ENCODE measurements at regions of chr11 and their contacts with region 1.

Region 1: GRCh38 chr11:9273376-9274336 is 8.5 kb upstream of the DENND5A start:
- DNase-seq: no peak
- H3K4me3 ChIP-seq: no peak overlapping the region
- H3K27me3 ChIP-seq: no peaks in the 10 kb centered on the region
- CTCF ChIP-seq: no peak

Region 2: GRCh38 chr11:8610532-8611116 is 663.0 kb before region 1 on chr11:
- CTCF ChIA-PET with region 1: no interaction called
- POLR2A ChIA-PET with region 1: no interaction called
- DNase-seq: no peak
- H3K4me3 ChIP-seq: no peak overlapping the region
- H3K27me3 ChIP-seq: no peaks in the 10 kb centered on the region
- CTCF ChIP-seq: no peak

Region 3: DNA sequence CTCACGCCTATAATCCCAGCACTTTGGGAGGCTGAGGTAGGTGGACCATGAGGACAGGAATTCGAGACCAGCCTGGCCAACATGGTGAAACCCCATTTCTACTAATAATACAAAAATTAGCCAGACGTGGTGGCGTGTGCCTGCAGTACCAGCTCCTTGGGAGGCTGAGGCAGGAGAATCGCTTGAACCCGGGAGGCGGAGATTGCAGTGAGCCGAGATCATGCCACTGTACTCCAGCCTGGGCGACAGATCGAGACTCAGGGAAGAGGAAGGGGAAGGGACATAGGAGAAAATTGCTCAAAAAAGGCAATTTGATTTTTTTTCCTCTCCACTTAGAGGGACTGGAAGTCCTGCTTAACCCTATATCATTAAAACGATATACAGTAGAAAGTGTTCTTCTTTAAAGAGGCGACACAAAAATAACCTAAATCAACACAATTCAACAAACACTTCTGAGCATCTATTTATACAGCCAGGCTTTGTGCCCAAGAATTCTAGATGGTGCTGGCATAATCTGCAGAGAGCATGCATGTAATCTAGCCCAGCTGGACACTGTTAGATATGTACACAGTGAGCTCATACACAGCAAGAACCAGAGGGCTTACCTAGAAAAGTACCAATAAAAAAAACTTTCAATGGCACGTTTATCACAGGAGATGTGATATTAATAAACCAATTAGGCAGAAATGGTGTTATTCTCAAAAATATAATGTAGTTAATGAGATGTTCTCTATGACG is 12.4 kb after region 1 on chr11:
- CTCF ChIA-PET with region 1: no interaction called
- POLR2A ChIA-PET with region 1: no interaction called
- DNase-seq: no peak
- H3K4me3 ChIP-seq: no peak overlapping the region
- H3K27me3 ChIP-seq: no peaks in the 10 kb centered on the region
- CTCF ChIP-seq: no peak

Region 4: GRCh38 chr11:9314291-9315036 is 40.8 kb after region 1 on chr11 and contains the start of gene TMEM41B:
- CTCF ChIA-PET with region 1: no interaction called
- POLR2A ChIA-PET with region 1: no interaction called
- DNase-seq: peak; percentile 89
- H3K4me3 ChIP-seq: peak within 1 kb of the TSS; percentile 88
- H3K27me3 ChIP-seq: no peaks in the 10 kb centered on the region
- CTCF ChIP-seq: 0 out of 2 replicates have a peak, but pooled peaks have one; percentile 4
- polyA plus RNA-seq, gene TMEM41B: 18.7 and 22.8 TPM in 2 replicates

Region 5: DNA sequence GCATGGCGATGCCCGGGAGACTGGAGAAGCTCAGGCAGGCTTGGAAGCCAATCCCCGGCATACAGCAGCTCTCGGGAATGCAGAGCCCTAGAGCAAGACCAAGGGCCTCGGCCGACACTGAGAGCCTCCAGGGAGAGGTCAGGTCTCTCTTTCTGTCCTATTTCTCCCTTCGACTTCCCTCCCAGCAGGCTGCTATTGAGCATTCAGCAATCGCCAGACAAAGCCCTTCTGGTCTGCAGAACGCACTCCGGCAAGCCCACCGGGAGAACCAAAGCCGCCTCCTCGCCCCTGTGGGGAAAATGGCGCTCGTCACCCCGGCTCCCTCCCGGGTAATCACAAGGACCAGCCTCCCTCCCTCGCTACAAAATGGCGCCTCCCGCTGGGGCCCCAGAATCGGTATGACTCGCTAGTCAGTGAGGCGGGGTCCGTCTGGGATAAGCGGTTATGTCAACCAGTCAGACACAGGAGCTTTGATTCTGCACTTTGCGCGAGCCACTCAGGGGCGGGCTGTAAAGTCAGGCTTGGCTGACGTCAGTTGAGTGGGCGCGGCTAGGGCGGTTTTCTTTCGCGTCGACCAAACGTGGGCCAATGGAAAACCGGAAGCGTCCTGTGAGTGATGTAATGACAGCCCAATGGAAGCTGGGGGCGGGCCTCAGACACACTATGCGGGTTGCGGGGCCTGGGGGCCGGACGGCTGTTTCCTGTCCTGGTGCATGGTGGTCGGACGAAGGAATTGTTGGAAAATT is 186.8 kb after region 1 on chr11 and contains the start of gene ZNF143:
- CTCF ChIA-PET with region 1: no interaction called
- POLR2A ChIA-PET with region 1: interaction called, 24 read pairs
- DNase-seq: peak; percentile 99
- H3K4me3 ChIP-seq: peak within 1 kb of the TSS; percentile 85
- H3K27me3 ChIP-seq: no peaks in the 10 kb centered on the region
- CTCF ChIP-seq: no peak
- polyA plus RNA-seq, gene ZNF143: 26.6 and 27.8 TPM in 2 replicates

Measured in BJ (cell line).